CD14-positive monocyte (primary cell): ENCODE measurements at regions of chr20 and their contacts with region 1.

Region 1: DNA sequence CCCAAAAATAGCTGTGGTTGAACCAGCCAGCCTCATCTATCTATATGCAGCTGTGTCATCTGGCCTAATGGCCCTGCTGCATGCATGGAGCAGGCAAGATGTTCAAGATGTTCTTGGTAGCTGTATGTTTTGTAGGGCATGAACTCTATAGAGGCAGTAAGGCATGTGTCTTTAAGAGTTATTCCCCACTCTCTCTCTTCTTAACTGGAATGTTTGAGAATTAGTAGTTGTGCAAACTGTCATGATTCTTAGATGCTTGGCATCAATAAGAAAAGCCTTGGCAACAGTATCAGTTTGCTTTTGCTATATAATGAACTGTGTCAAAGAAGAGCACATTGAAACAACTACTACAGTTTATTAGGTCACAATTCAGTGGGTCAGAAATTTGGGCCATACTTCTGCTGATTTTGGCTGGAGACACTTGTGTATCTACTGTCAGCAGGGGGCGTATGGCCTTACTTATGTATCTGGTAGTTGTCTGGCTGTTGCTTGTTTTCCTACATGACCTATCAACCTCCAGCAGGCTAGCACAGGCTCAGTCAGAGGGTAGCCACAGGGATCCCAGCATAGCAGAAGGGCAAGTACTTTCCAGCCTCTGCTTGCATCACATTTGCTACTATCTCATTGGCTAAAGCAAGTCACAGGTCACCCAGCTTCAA is 56.1 kb upstream of the LAMP5 start:
- DNase-seq: peak; percentile 33 to 63 (median 40)
- H3K4me3 ChIP-seq: no peak overlapping the region
- H3K4me3 Mint-ChIP-seq: no peak overlapping the region
- H3K27ac ChIP-seq: no peak overlapping the region
- H3K27ac Mint-ChIP-seq: no peak overlapping the region
- H3K4me1 ChIP-seq: peaks cover 33 to 52% of the 10 kb centered on the region in 2 donors
- H3K4me1 Mint-ChIP-seq: peaks cover 48% of the 10 kb centered on the region
- H3K27me3 ChIP-seq: no peaks in the 10 kb centered on the region
- H3K27me3 Mint-ChIP-seq: peaks cover 0 to 4% (median 3%) of the 10 kb centered on the region in 3 donors
- CTCF ChIP-seq: peak; percentile 49

Region 2: GRCh38 chr20:9172851-9173250 is 285.4 kb before region 1 on chr20:
- intact Hi-C with region 1: no loop called
- DNase-seq: no peak
- H3K4me3 ChIP-seq: no peak overlapping the region
- H3K4me3 Mint-ChIP-seq: no peak overlapping the region
- H3K27ac ChIP-seq: no peak overlapping the region
- H3K27ac Mint-ChIP-seq: no peak overlapping the region
- H3K4me1 ChIP-seq: no peaks in the 10 kb centered on the region
- H3K4me1 Mint-ChIP-seq: no peaks in the 10 kb centered on the region
- H3K27me3 ChIP-seq: no peaks in the 10 kb centered on the region
- H3K27me3 Mint-ChIP-seq: no peaks in the 10 kb centered on the region
- CTCF ChIP-seq: no peak

Region 3: DNA sequence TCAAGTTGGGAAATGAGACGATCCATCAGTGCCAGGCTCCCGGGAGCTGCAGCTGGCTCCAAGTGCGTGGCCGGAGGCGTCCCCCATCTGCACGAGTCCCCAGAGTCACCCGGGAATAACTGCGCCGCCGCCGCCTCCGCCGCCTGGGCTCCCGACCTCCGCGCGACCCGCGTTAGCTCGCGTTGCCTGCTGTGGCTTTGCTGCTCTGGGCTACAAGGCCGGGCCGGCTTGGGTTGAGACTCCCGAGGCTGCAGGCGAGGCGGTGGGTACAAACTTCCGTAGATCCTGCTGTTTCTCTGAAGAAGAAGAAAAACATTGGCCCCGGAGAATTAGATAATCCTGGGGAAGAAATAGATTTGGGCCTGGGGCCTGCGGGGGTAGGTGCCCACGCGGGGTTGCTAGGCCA is 48.7 kb after region 1 on chr20:
- intact Hi-C with region 1: loop called in 1 of 2 experiments (anchors 5 kb)
- DNase-seq: no peak
- H3K4me3 ChIP-seq: peak overlapping the region in 2 of 3 experiments; percentile 11 to 64
- H3K4me3 Mint-ChIP-seq: peak overlapping the region; percentile 60 to 92
- H3K27ac ChIP-seq: no peak overlapping the region
- H3K27ac Mint-ChIP-seq: no peak overlapping the region
- H3K4me1 ChIP-seq: peaks cover 61 to 63% of the 10 kb centered on the region in 2 donors
- H3K4me1 Mint-ChIP-seq: peaks cover 59% of the 10 kb centered on the region
- H3K27me3 ChIP-seq: peaks cover 58 to 69% of the 10 kb centered on the region in 2 donors
- H3K27me3 Mint-ChIP-seq: peaks cover 61 to 67% (median 65%) of the 10 kb centered on the region in 3 donors
- CTCF ChIP-seq: no peak